IMR-90 (cell line): ENCODE measurements at regions of chr4 and their contacts with region 1.

Region 1: GRCh38 chr4:16001484-16001858 is 38.5 kb upstream of the FGFBP2 start:
- DNase-seq: peak; percentile 72
- ATAC-seq: peak; percentile 99
- H3K4me3 ChIP-seq: no peak overlapping the region
- H3K27ac ChIP-seq: no peak overlapping the region
- H3K4me1 ChIP-seq: no peaks in the 10 kb centered on the region
- H3K27me3 ChIP-seq: peaks cover 17% of the 10 kb centered on the region
- CTCF ChIP-seq: peak; percentile 91
- POLR2A ChIP-seq: no peak
- RAD21 ChIP-seq: peak; percentile 95

Region 2: DNA sequence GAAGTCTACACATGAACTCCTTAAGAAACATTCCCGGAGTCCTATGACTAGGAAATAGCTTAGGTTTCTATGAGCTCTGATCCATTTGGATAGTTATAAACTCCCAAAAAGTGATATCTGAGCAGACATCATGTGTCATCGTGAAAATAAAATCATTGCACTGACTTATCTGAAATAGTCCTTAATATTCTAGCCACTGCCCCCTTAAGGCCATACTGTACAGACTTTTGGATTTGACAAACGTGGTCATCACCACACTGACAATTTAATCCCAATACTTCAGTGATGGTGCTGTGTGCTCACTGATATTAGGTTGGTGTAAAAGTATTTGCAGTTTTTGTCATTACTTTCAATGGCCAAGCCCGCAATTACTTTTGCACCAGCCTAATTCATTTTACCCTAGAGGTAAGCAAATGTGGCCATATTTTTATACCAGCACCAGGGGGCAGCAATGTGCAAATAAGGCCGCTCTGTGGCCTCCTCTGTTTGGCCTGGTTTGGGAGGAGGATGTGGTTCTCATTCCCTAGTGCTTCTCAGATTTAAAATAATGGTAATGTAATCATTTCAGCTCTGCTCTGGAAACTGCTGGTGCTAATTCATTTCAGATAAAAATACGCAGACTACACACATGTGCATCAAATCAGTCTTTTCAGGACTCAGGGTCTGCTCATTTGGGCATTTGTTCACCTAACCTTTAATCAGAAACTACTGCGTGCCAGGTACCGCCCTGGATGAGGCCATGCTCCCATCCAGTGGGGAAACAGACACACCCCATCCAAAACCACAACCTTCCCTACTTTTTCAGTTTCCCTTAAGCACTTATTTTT is 770.0 kb before region 1 on chr4:
- CTCF ChIA-PET with region 1: no interaction called
- POLR2A ChIA-PET with region 1: no interaction called
- dilution Hi-C with region 1: no loop called
- in situ Hi-C with region 1: no loop called
- intact Hi-C with region 1: loop called (anchors 10 kb)
- DNase-seq: peak; percentile 88
- ATAC-seq: peak; percentile 78
- H3K4me3 ChIP-seq: no peak overlapping the region
- H3K27ac ChIP-seq: peak overlapping the region; percentile 31; the same call in 1 of the 2 replicates
- H3K4me1 ChIP-seq: peaks cover 27% of the 10 kb centered on the region
- H3K27me3 ChIP-seq: peaks cover 3% of the 10 kb centered on the region; the same call in 1 of the 2 replicates
- CTCF ChIP-seq: peak; percentile 88
- POLR2A ChIP-seq: no peak
- RAD21 ChIP-seq: peak; percentile 83

Region 3: DNA sequence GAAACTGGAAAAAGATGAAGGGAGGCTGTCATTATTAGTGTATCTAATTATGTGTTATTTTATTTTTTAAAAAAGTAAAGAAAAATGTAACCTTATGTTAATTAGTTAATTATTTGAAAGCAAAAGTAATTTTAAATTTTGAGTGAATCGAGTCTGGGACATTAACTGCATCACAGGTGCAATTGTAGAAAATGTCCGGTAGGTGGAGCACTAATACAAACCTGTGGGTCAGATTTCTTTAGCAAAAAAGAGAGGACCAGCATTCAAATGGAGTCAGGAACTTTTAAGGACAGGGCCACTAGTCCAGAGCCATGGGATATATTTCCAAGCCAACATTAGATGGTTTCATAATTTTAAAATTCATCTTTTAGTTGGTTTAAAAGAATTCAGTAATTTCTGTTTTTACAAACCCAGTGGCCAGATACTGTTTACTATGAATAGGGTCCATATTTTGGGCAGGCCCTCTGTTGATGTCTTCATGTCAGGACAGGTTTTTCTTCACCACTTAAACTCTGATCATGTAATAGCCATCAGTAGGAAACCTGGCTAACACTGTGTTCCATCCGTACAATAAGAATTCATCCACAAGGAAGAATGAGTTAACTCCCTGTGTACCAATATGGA is 271.4 kb before region 1 on chr4:
- CTCF ChIA-PET with region 1: no interaction called
- POLR2A ChIA-PET with region 1: no interaction called
- dilution Hi-C with region 1: no loop called
- in situ Hi-C with region 1: no loop called
- intact Hi-C with region 1: loop called (anchors 2 kb)
- DNase-seq: peak; percentile 53
- ATAC-seq: peak; percentile 88
- H3K4me3 ChIP-seq: no peak overlapping the region
- H3K27ac ChIP-seq: no peak overlapping the region
- H3K4me1 ChIP-seq: 0 out of 2 replicates have a peak, but pooled peaks cover 2% of the 10 kb centered on the region
- H3K27me3 ChIP-seq: no peaks in the 10 kb centered on the region
- CTCF ChIP-seq: peak; percentile 83
- POLR2A ChIP-seq: no peak
- RAD21 ChIP-seq: peak; percentile 69

Region 4: DNA sequence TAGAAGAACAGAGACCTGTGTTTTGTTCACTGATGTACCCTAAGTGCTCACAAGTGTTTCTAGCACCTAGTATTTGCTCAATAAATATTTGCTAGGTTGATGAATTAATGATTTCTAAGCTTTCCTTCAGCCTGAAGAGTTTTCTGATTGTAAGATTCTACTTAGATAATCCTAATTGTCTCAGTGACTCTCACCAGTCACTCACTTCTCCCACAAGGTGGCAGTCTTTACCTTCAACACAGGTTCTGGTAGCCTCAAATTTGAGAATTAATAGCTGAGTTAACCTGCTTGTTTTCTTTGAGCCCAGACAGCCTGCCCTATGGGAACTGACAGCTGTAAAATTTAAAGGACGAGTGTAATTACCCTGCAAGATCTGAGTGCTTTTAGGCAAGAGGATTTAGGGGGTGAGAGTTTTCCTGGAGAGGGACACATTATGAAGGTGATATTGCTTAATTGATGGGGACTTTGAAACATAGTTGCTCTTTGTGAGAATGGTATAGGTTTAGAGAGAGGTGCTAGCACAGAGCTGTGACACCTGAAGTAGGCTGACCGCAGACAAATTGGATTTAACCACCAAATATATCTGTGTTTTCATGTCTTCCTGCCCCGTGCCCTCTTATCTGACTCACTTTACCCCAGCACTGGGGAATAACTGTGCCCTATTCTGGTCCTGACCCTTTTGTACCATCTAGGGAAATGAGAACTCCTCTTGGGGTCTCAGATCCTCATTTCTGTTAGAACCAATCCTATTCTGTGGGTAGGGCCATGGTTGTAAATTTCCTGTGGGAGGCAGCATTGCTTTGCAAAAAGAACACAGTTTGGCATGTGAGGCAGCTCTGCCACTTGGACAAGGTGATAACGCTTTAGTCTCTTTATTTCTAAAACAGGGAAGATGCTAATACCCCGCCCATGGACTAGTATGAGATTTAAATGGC is 195.6 kb before region 1 on chr4:
- CTCF ChIA-PET with region 1: interaction called, 7 read pairs
- POLR2A ChIA-PET with region 1: interaction called, 4 read pairs
- dilution Hi-C with region 1: no loop called
- in situ Hi-C with region 1: loop called (anchors 5 kb)
- intact Hi-C with region 1: loop called (anchors 1 kb)
- DNase-seq: peak; percentile 63
- ATAC-seq: peak; percentile 84
- H3K4me3 ChIP-seq: no peak overlapping the region
- H3K27ac ChIP-seq: no peak overlapping the region
- H3K4me1 ChIP-seq: no peaks in the 10 kb centered on the region
- H3K27me3 ChIP-seq: peaks cover 27% of the 10 kb centered on the region
- CTCF ChIP-seq: peak; percentile 83
- POLR2A ChIP-seq: no peak
- RAD21 ChIP-seq: peak; percentile 84

Region 5: GRCh38 chr4:15963001-15963451 is 38.4 kb before region 1 on chr4 and contains the start of gene FGFBP2:
- CTCF ChIA-PET with region 1: no interaction called
- POLR2A ChIA-PET with region 1: no interaction called
- dilution Hi-C with region 1: no loop called
- in situ Hi-C with region 1: no loop called
- intact Hi-C with region 1: loop called (anchors 1 kb)
- DNase-seq: peak; percentile 44
- ATAC-seq: peak; percentile 81
- H3K4me3 ChIP-seq: no peak within 1 kb of the TSS
- H3K27ac ChIP-seq: no peak within 1 kb of the TSS
- H3K4me1 ChIP-seq: no peaks in the 10 kb centered on the region
- H3K27me3 ChIP-seq: peaks cover 33% of the 10 kb centered on the region
- CTCF ChIP-seq: peak; percentile 55
- POLR2A ChIP-seq: no peak
- RAD21 ChIP-seq: peak; percentile 64
- total RNA-seq, gene FGFBP2: not detected in 2 replicates

Region 6: GRCh38 chr4:15982842-15983524 is 18.5 kb before region 1 on chr4:
- CTCF ChIA-PET with region 1: no interaction called
- POLR2A ChIA-PET with region 1: no interaction called
- dilution Hi-C with region 1: no loop called
- in situ Hi-C with region 1: no loop called
- intact Hi-C with region 1: no loop called
- DNase-seq: peak; percentile 38
- ATAC-seq: peak; percentile 77
- H3K4me3 ChIP-seq: no peak overlapping the region
- H3K27ac ChIP-seq: no peak overlapping the region
- H3K4me1 ChIP-seq: no peaks in the 10 kb centered on the region
- H3K27me3 ChIP-seq: peaks cover 11% of the 10 kb centered on the region
- CTCF ChIP-seq: no peak
- POLR2A ChIP-seq: no peak
- RAD21 ChIP-seq: no peak

Region 7: DNA sequence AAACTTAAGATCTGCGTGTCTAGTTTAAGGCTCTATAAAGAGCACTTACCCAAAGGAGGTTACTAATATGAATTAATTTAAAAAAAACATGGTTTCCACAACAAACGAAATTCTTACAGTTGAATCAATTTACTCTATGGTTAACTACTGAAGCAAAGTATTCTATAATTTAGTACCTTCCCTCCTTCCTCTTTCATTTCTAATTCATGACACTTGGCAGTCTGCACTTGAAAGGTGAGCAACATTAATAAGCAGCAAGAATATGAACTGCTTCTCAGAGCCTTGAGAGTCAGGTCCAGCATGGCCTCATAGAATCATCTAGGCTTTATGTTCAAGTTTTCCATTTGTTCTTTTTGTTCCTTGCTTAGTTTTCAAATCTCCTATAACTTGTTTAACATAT is 182.1 kb after region 1 on chr4:
- CTCF ChIA-PET with region 1: no interaction called
- POLR2A ChIA-PET with region 1: no interaction called
- dilution Hi-C with region 1: no loop called
- in situ Hi-C with region 1: no loop called
- intact Hi-C with region 1: no loop called
- DNase-seq: no peak
- ATAC-seq: no peak
- H3K4me3 ChIP-seq: no peak overlapping the region
- H3K27ac ChIP-seq: no peak overlapping the region
- H3K4me1 ChIP-seq: no peaks in the 10 kb centered on the region
- H3K27me3 ChIP-seq: no peaks in the 10 kb centered on the region
- CTCF ChIP-seq: no peak
- POLR2A ChIP-seq: no peak
- RAD21 ChIP-seq: no peak